GM18951 (cell line): ENCODE measurements at regions of chr2 and their contacts with region 1.

Region 1: DNA sequence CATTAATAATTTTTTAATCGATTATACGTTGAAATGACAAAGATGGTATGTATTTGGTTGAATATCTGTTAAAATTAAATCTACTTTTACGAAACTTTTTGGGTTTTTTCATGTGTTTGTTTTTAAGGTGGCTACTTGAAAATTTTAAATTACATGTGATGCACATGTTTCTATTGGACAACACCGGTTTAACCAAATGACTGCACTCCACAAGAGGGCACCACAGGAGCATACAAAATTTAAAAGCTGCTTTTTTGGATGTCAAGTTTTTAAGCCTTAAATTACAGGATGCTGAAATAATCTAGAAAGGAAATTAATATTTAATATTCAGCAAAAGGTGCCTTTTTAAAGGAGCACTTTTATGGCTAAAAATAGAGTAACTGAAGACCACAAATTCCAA is 98.7 kb downstream of the ACVR1 start:
- POLR2A ChIP-seq: no peak

Region 2: GRCh38 chr2:157540102-157540501 is 237.3 kb before region 1 on chr2:
- in situ Hi-C with region 1: no loop called
- POLR2A ChIP-seq: no peak

Region 3: GRCh38 chr2:157967856-157968255 is 190.4 kb after region 1 on chr2:
- in situ Hi-C with region 1: no loop called
- POLR2A ChIP-seq: no peak

Region 4: GRCh38 chr2:158006961-158007719 is 229.7 kb after region 1 on chr2:
- in situ Hi-C with region 1: loop called (anchors 10 kb)
- POLR2A ChIP-seq: no peak